AG04449 (cell line): ENCODE measurements at regions of chr10 and their contacts with region 1.

Region 1: GRCh38 chr10:13475124-13475523 is 53.7 kb downstream of the BEND7 start:
- DNase-seq: no peak
- H3K4me3 ChIP-seq: no peak overlapping the region
- CTCF ChIP-seq: no peak

Region 2: GRCh38 chr10:13291821-13292773 is 183.0 kb before region 1 on chr10:
- CTCF ChIA-PET with region 1: no interaction called
- POLR2A ChIA-PET with region 1: no interaction called
- DNase-seq: no peak
- H3K4me3 ChIP-seq: no peak overlapping the region
- CTCF ChIP-seq: no peak

Region 3: DNA sequence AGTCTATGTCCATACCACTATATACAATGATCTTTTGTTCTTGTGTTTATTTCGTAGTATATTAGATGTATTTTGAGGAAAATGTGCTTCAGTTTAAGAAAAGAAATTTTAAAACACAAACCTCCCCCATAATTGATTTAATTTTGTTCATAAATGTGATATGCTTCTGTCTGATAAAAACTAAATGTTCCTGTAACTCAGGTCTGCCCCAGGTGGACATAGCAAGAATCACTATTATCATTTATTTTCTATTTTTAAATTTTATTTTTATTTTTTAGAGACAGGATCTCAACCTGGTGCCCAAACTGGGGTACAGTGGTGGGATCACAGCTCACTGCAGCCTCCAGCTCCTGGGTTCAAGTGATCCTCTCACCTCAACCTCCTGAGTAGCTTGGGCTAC is 10.5 kb after region 1 on chr10:
- CTCF ChIA-PET with region 1: interaction called, 11 read pairs
- POLR2A ChIA-PET with region 1: no interaction called
- DNase-seq: no peak
- H3K4me3 ChIP-seq: no peak overlapping the region
- CTCF ChIP-seq: peak; percentile 31

Region 4: DNA sequence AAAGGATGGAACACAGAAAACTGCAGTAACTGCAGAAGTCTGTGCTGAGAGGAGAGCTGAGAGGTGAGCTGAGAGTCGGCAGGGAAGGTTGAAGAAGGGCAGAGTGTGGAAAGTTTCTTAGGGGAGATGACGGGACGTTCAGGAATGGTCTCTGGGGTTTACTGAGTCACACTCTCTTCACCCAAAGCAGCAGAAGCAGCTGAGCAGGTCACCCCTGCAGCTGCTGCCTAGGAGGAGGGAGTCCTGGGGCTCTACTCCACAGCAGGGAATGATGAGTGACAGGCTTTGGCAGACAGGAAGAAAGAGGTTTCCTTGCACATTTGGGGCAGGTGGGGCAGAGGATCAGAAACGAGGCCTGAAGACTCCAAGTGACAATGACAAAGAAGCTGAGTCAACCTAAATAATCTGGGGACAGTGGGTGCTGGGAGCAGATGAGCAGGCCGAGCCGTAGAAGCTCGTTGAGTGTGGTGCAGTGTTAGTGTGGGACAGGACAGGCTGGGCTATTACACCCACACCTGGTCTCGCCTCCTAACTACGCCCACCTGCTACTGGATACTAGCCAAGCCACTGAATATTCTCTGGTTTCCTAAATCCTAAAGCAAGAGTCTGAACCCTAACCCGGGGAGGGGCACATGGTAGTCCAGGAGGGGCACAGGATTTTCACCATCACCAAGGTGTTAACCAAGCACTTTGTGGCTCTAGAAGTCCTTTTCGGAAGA is 28.8 kb after region 1 on chr10:
- CTCF ChIA-PET with region 1: no interaction called
- POLR2A ChIA-PET with region 1: no interaction called
- DNase-seq: peak; percentile 38
- H3K4me3 ChIP-seq: no peak overlapping the region
- CTCF ChIP-seq: no peak

Region 5: DNA sequence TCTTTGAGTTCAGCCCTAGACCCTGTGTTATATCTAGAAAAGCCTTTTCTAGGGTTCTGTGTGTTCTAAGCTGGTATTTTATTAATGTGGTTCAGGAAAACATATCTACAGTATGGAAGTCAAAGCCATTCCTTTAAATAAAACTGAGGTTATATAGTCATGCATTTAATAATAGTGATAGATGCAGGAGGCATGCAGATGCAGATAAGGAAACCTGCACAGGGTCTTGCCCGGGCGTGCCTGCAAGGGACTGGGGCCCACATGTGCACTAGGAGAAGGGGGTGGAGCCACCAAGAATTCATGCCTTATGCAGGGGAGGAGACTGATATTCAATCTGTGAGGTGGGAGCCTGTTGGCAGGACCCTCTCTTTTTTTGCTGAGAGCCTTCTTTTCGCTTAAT is 283.2 kb after region 1 on chr10:
- CTCF ChIA-PET with region 1: no interaction called
- POLR2A ChIA-PET with region 1: no interaction called
- DNase-seq: peak; percentile 33
- H3K4me3 ChIP-seq: no peak overlapping the region
- CTCF ChIP-seq: no peak